ENCODE measurements at regions of chr12 and their contacts with region 1.

Region 1: GRCh38 chr12:94101738-94102660 is 46.4 kb upstream of the PLXNC1 start:
- DNase-seq: peak; percentile 93
- ATAC-seq: peak; percentile 85
- H3K4me3 Mint-ChIP-seq: peak overlapping the region; percentile 79
- H3K27ac Mint-ChIP-seq: peak overlapping the region; percentile 84
- H3K4me1 Mint-ChIP-seq: peaks cover 39% of the 10 kb centered on the region
- H3K27me3 Mint-ChIP-seq: peaks cover 9% of the 10 kb centered on the region

Region 2: GRCh38 chr12:93467351-93468007 is 634.5 kb before region 1 on chr12 and contains the start of gene MRPL42:
- CTCF ChIA-PET with region 1: interaction called, 10 read pairs
- POLR2A ChIA-PET with region 1: no interaction called
- DNase-seq: peak; percentile 94
- ATAC-seq: peak; percentile 90
- H3K4me3 Mint-ChIP-seq: peak within 1 kb of the TSS; percentile 94
- H3K27ac Mint-ChIP-seq: peak within 1 kb of the TSS; percentile 97
- H3K4me1 Mint-ChIP-seq: peaks cover 30% of the 10 kb centered on the region
- H3K27me3 Mint-ChIP-seq: no peaks in the 10 kb centered on the region
- total RNA-seq, gene MRPL42: 55.8 to 57.0 TPM

Region 3: GRCh38 chr12:93541578-93542225 is 560.3 kb before region 1 on chr12:
- CTCF ChIA-PET with region 1: interaction called, 12 read pairs
- POLR2A ChIA-PET with region 1: no interaction called
- DNase-seq: no peak
- ATAC-seq: peak; percentile 41
- H3K4me3 Mint-ChIP-seq: peak overlapping the region; percentile 5
- H3K27ac Mint-ChIP-seq: peak overlapping the region; percentile 75
- H3K4me1 Mint-ChIP-seq: peaks cover 60% of the 10 kb centered on the region
- H3K27me3 Mint-ChIP-seq: no peaks in the 10 kb centered on the region

Region 4: GRCh38 chr12:93766796-93767523 is 335.0 kb before region 1 on chr12:
- CTCF ChIA-PET with region 1: interaction called, 259 read pairs
- POLR2A ChIA-PET with region 1: interaction called, 6 read pairs
- DNase-seq: peak; percentile 68
- ATAC-seq: peak; percentile 82
- H3K4me3 Mint-ChIP-seq: no peak overlapping the region
- H3K27ac Mint-ChIP-seq: peak overlapping the region; percentile 40
- H3K4me1 Mint-ChIP-seq: peaks cover 41% of the 10 kb centered on the region
- H3K27me3 Mint-ChIP-seq: no peaks in the 10 kb centered on the region

Region 5: GRCh38 chr12:93979189-93979588 is 122.8 kb before region 1 on chr12:
- CTCF ChIA-PET with region 1: interaction called, 139 read pairs
- POLR2A ChIA-PET with region 1: no interaction called
- DNase-seq: peak; percentile 50
- ATAC-seq: no peak
- H3K4me3 Mint-ChIP-seq: no peak overlapping the region
- H3K27ac Mint-ChIP-seq: no peak overlapping the region
- H3K4me1 Mint-ChIP-seq: peaks cover 31% of the 10 kb centered on the region
- H3K27me3 Mint-ChIP-seq: peaks cover 5% of the 10 kb centered on the region

Region 6: GRCh38 chr12:94080348-94081009 is 21.5 kb before region 1 on chr12:
- CTCF ChIA-PET with region 1: interaction called, 40 read pairs
- POLR2A ChIA-PET with region 1: interaction called, 5 read pairs
- DNase-seq: no peak
- ATAC-seq: no peak
- H3K4me3 Mint-ChIP-seq: no peak overlapping the region
- H3K27ac Mint-ChIP-seq: no peak overlapping the region
- H3K4me1 Mint-ChIP-seq: peaks cover 9% of the 10 kb centered on the region
- H3K27me3 Mint-ChIP-seq: peaks cover 14% of the 10 kb centered on the region

Region 7: DNA sequence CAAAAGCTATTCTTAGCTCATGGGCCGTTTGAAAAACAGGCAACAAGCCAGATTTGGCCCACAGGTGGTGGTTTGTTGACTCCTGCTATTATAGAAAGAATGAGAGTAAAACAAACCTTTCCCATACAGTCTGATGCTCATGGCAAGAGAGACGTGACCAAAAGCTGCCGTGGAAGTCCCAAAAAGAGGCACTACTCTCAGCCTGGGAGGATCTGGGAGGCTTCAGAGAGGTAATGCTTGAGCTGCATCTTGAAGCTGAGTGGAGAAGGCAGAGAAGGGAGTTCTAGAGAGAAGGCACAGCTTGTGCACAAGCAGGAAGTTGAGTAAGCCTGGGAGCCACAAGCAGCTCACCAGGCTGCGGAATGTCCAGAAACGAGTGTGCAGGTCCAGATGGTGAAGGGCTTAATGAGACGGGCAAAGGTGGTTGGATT is 56.0 kb after region 1 on chr12:
- CTCF ChIA-PET with region 1: no interaction called
- POLR2A ChIA-PET with region 1: no interaction called
- DNase-seq: no peak
- ATAC-seq: no peak
- H3K4me3 Mint-ChIP-seq: no peak overlapping the region
- H3K27ac Mint-ChIP-seq: no peak overlapping the region
- H3K4me1 Mint-ChIP-seq: peaks cover 25% of the 10 kb centered on the region
- H3K27me3 Mint-ChIP-seq: peaks cover 1% of the 10 kb centered on the region

Region 8: GRCh38 chr12:94445662-94446061 is 343.7 kb after region 1 on chr12:
- CTCF ChIA-PET with region 1: no interaction called
- POLR2A ChIA-PET with region 1: no interaction called
- DNase-seq: no peak
- ATAC-seq: no peak
- H3K4me3 Mint-ChIP-seq: no peak overlapping the region
- H3K27ac Mint-ChIP-seq: no peak overlapping the region
- H3K4me1 Mint-ChIP-seq: peaks cover 2% of the 10 kb centered on the region
- H3K27me3 Mint-ChIP-seq: no peaks in the 10 kb centered on the region

Region 9: GRCh38 chr12:94535510-94535921 is 433.5 kb after region 1 on chr12:
- CTCF ChIA-PET with region 1: interaction called, 16 read pairs
- POLR2A ChIA-PET with region 1: no interaction called
- DNase-seq: no peak
- ATAC-seq: no peak
- H3K4me3 Mint-ChIP-seq: no peak overlapping the region
- H3K27ac Mint-ChIP-seq: peak overlapping the region; percentile 64
- H3K4me1 Mint-ChIP-seq: peaks cover 39% of the 10 kb centered on the region
- H3K27me3 Mint-ChIP-seq: peaks cover 2% of the 10 kb centered on the region